ENCODE measurements at regions of chr1 and their contacts with region 1.

Region 1: GRCh38 chr1:25204797-25205480 is 27.4 kb downstream of the SYF2 start:
- DNase-seq: peak; percentile 66
- ATAC-seq: peak; percentile 59; the same call in 2 of the 3 replicates
- H3K4me3 ChIP-seq: peak overlapping the region; percentile 18 to 52 (median 42); a peak in 4 of 6 replicates
- H3K27ac ChIP-seq: no peak overlapping the region
- H3K4me1 ChIP-seq: peaks cover 43% of the 10 kb centered on the region
- H3K27me3 ChIP-seq: no peaks in the 10 kb centered on the region; a peak in 1 of 5 replicates
- CTCF ChIP-seq: peak; percentile 71
- EP300 ChIP-seq: no peak
- POLR2A ChIP-seq: no peak
- RAD21 ChIP-seq: peak; percentile 67

Region 2: GRCh38 chr1:24724345-24725208 is 480.4 kb before region 1 on chr1:
- CTCF ChIA-PET with region 1: no interaction called
- POLR2A ChIA-PET with region 1: no interaction called
- in situ Hi-C with region 1: no loop called
- intact Hi-C with region 1: no loop called
- DNase-seq: peak; percentile 96
- ATAC-seq: peak; percentile 94
- H3K4me3 ChIP-seq: peak overlapping the region; percentile 55 to 72 (median 72)
- H3K27ac ChIP-seq: peak overlapping the region; percentile 88
- H3K4me1 ChIP-seq: peaks cover 69% of the 10 kb centered on the region
- H3K27me3 ChIP-seq: no peaks in the 10 kb centered on the region
- CTCF ChIP-seq: no peak
- EP300 ChIP-seq: peak in 1 of 2 experiments; percentile 72; a peak in 1 of 4 replicates
- POLR2A ChIP-seq: peak; percentile 91 to 92
- RAD21 ChIP-seq: no peak

Region 3: DNA sequence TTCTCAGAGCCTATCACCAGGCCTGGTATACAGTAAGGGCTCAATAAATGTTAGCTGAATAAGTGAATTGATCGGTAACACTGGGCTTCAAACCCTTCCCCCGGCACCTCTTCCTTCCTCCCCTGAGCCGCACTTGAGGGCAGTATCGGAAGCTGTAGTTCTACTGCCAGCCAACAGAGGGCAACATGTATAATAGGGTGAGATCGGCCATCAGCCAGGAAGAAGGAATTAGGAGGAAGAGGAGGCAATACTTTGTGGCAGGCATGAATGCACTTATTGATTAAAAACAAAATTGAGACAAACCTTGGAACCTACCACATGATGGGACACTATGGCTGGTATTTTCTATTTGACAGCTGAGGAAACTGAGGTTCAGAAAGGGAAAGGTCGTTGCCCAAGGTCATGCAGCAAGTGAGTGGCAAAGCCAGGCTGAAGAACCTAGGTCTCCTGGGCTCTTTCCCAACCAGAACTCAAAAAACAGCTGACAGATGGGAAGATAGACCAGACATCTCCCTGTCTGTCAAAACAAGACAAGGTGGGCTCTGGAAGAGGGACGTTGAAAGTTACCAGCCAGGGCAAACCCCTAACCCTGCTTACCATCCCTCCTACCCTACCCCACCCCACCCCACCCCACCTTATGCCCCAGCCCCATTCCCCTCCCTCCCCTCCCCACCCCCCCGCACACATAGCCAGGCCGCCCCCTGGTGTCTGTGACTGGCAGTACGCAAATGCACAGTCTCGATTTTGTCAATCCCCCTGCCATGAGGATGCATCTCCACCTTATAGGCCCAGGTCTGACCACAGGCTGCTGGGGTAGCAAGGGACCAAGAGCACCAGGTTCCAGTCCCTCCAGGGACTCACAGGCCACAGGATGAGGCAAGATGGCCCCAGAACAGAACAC is 167.5 kb before region 1 on chr1:
- CTCF ChIA-PET with region 1: interaction called, 10 read pairs
- POLR2A ChIA-PET with region 1: no interaction called
- in situ Hi-C with region 1: no loop called
- intact Hi-C with region 1: loop called (anchors 5 kb)
- DNase-seq: peak; percentile 41
- ATAC-seq: peak; percentile 57
- H3K4me3 ChIP-seq: no peak overlapping the region
- H3K27ac ChIP-seq: no peak overlapping the region
- H3K4me1 ChIP-seq: peaks cover 7% of the 10 kb centered on the region; the same call in 1 of the 2 replicates
- H3K27me3 ChIP-seq: peaks cover 3 to 23% of the 10 kb centered on the region in 2 experiments; a peak in 2 of 5 replicates
- CTCF ChIP-seq: peak; percentile 65
- EP300 ChIP-seq: no peak
- POLR2A ChIP-seq: no peak
- RAD21 ChIP-seq: peak; percentile 26; the same call in 1 of the 2 replicates

Region 4: GRCh38 chr1:25117233-25117823 is 87.6 kb before region 1 on chr1:
- CTCF ChIA-PET with region 1: interaction called, 55 read pairs
- POLR2A ChIA-PET with region 1: interaction called, 3 read pairs
- in situ Hi-C with region 1: loop called (anchors 5 kb)
- intact Hi-C with region 1: loop called (anchors 1 kb)
- DNase-seq: peak; percentile 60
- ATAC-seq: peak; percentile 94
- H3K4me3 ChIP-seq: no peak overlapping the region
- H3K27ac ChIP-seq: no peak overlapping the region
- H3K4me1 ChIP-seq: peaks cover 16% of the 10 kb centered on the region
- H3K27me3 ChIP-seq: peaks cover 0 to 3% of the 10 kb centered on the region in 2 experiments; a peak in 1 of 5 replicates
- CTCF ChIP-seq: peak; percentile 80
- EP300 ChIP-seq: no peak
- POLR2A ChIP-seq: no peak
- RAD21 ChIP-seq: peak; percentile 84

Region 5: DNA sequence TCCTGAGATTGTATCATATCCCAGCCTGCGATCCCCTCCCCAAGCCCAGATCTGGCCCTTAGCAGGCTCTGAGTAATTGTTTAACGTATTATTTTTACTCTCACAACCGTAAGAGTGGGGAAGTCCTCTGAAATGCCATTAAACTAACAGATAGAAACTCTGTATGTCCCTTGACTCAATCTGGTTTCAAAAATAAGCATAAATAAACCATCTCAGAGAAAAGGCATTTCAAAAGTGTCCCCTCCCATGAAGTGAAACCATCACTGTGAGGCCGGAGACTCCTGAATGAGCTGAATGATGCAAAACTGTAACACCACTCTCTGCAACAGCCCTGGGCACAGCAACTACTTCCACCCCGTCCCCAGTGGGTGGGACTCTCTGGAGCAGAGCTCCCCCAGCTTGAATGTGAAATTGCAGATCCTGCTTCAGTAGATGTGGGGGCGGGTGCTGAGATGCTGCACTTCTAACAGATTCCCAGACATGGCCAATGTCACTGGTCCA is 76.8 kb before region 1 on chr1:
- CTCF ChIA-PET with region 1: no interaction called
- POLR2A ChIA-PET with region 1: no interaction called
- in situ Hi-C with region 1: no loop called
- intact Hi-C with region 1: loop called (anchors 2 kb)
- DNase-seq: no peak
- ATAC-seq: peak; percentile 26; the same call in 1 of the 3 replicates
- H3K4me3 ChIP-seq: 0 out of 6 replicates have a peak overlapping the region, but pooled peaks of 1 of the 3 experiments have one; percentile 13
- H3K27ac ChIP-seq: no peak overlapping the region
- H3K4me1 ChIP-seq: peaks cover 23% of the 10 kb centered on the region
- H3K27me3 ChIP-seq: 0 out of 5 replicates have a peak, but pooled peaks cover 0 to 1% of the 10 kb centered on the region in 2 experiments
- CTCF ChIP-seq: no peak
- EP300 ChIP-seq: no peak
- POLR2A ChIP-seq: no peak
- RAD21 ChIP-seq: no peak

Region 6: DNA sequence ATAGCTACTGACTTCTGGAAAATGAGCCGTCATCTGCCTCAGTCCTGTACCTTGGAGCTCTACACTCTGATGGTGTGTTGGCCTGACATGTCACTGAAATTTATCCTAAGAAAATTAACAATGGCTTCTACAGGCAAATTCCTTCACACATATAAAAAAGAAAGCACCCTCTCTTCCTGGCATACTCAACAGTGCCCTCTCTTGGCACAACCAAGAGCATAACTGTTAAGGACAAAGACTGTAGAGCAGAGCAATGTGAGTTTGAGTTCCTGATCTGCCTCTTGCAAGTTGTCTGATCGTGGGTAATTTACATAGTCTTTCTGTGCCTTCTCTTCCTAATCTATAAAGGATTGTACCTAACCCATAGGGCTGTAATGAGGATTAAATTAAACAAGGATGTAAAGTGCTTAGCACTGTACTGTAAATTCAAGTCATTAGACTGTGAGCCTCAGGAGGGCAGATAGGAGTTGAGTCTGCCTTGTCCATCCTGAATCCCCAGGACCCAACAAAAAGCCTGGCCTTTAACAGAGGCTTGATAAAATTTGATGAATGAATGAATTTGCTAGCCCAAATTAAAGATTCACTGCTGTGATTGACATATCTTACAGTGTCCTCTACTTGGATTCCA is 56.2 kb before region 1 on chr1:
- CTCF ChIA-PET with region 1: interaction called, 11 read pairs
- POLR2A ChIA-PET with region 1: no interaction called
- in situ Hi-C with region 1: no loop called
- intact Hi-C with region 1: loop called (anchors 2 kb)
- DNase-seq: peak; percentile 27
- ATAC-seq: peak; percentile 37; the same call in 1 of the 3 replicates
- H3K4me3 ChIP-seq: no peak overlapping the region
- H3K27ac ChIP-seq: no peak overlapping the region
- H3K4me1 ChIP-seq: peaks cover 10% of the 10 kb centered on the region; the same call in 1 of the 2 replicates
- H3K27me3 ChIP-seq: no peaks in the 10 kb centered on the region
- CTCF ChIP-seq: peak; percentile 62
- EP300 ChIP-seq: no peak
- POLR2A ChIP-seq: no peak
- RAD21 ChIP-seq: peak; percentile 36; the same call in 1 of the 2 replicates

Region 7: DNA sequence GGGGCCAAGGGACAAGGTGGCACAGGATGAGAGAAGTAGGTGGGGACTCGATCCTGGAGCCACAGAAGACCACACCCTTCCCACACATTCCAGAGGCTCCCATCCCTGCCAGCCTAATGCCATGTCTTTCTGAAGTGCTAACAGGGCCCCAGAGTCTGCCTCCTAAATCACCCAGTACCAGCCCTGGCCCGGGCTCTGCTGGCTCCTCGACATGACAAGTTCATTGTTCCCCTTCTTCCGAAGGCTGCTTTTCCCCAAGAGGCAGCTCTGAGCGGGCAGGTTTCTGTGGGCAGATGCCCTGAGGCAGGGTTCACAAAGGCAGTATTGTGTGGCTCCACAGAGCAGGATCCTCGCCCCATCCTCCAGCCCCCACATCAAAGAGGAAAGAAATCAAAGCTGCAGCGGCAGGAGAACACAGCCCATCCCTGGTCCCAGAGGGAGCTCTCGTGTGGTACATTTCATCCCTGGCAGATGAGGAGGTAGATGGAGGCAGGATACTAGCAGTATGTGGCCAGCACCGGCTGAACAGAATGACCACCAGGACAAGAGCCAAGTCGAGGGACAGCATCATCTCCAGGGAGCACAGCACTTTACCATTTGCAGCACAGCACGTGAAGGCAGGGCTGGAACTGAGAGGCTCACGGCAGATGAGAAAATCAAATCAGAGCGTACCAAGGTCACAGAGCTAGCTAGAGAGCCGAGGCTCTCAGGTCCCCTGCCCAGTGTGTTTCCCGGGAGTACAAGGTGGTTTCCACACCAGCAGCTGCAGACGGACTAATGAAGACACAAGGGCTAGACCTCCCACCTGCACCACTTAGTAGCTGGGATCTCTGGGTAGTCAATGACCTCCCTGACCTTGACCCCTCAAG is 37.4 kb before region 1 on chr1:
- CTCF ChIA-PET with region 1: no interaction called
- POLR2A ChIA-PET with region 1: interaction called, 48 read pairs
- in situ Hi-C with region 1: loop called (anchors 5 kb)
- intact Hi-C with region 1: no loop called
- DNase-seq: peak; percentile 93
- ATAC-seq: peak; percentile 85
- H3K4me3 ChIP-seq: peak overlapping the region; percentile 31 to 66 (median 35); a peak in 5 of 6 replicates
- H3K27ac ChIP-seq: peak overlapping the region; percentile 97
- H3K4me1 ChIP-seq: peaks cover 73% of the 10 kb centered on the region
- H3K27me3 ChIP-seq: no peaks in the 10 kb centered on the region
- CTCF ChIP-seq: peak; percentile 61
- EP300 ChIP-seq: peak; percentile 42 to 86; a peak in 3 of 4 replicates
- POLR2A ChIP-seq: peak in 1 of 2 experiments; percentile 49; a peak in 1 of 4 replicates
- RAD21 ChIP-seq: 0 out of 2 replicates have a peak, but pooled peaks have one; percentile 5

Region 8: DNA sequence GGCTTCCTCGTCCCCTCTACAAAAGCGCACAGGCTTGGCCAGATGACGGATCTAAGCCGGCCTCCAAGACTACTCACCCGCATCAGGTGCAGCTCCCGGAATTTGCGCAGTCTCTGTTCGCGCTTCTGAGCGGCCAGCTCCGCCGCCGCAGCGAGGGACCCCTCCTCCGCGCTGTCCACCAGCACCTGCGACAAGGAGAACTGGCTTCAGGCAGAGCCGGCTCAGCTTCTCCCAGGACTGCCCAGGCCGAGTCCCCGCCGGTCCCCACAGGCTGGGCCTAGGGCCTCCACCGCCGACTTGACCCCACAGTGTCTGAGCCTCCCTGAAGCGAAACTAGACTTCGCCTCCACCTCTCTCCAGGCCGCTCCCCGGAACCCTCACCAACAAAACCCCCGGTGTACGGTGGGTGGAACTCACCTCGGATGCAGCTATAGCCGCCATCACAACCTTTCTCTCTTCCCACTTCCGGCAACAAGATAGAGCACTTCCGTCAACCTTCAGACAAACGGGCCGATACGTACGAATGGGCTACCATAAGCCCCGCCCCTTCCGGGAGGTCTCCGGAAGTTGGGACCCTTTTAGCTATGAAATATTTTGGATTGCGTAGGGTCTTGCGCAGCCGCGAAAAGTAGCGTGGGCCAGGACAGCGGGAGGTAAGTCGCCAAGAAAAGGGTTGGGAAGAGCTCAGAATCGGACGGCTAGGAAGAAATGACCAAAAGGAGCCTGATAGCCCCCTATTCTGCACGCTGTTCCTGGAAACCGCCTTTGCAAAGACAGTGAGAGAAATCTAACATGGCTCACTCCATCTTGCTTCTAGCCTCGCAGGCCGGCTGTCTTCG is 27.3 kb after region 1 on chr1 and contains the start of gene SYF2:
- CTCF ChIA-PET with region 1: no interaction called
- POLR2A ChIA-PET with region 1: interaction called, 13 read pairs
- in situ Hi-C with region 1: no loop called
- intact Hi-C with region 1: no loop called
- DNase-seq: peak; percentile 93
- ATAC-seq: peak; percentile 95
- H3K4me3 ChIP-seq: peak within 1 kb of the TSS; percentile 74 to 86 (median 84)
- H3K27ac ChIP-seq: peak within 1 kb of the TSS; percentile 82
- H3K4me1 ChIP-seq: peaks cover 21% of the 10 kb centered on the region
- H3K27me3 ChIP-seq: no peaks in the 10 kb centered on the region
- CTCF ChIP-seq: no peak
- EP300 ChIP-seq: no peak
- POLR2A ChIP-seq: peak; percentile 64 to 65
- RAD21 ChIP-seq: no peak; the same call in 1 of the 2 replicates
- total RNA-seq, gene SYF2: 34.1 and 42.8 TPM in 2 replicates

Region 9: DNA sequence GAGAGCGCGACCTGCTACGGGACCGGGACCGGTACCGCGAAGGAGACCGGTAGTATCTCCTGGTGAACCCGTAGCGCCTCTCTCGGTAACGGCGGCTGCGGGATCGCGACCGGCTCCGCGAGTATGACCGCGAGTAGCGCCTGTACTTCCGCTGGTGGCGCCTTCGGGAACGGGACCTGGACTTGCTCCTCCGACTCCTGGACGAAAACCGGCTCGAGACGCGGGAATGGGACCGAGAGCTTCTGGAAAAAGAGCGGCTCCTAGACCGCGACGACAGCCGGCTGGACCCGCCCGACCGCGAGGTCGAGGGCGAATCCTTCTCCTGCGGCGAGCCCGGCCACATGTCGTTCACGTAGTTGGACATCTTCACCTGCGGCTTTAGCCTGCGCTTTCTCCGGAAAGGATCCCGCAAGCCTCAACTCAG is 41.7 kb after region 1 on chr1:
- CTCF ChIA-PET with region 1: no interaction called
- POLR2A ChIA-PET with region 1: no interaction called
- in situ Hi-C with region 1: no loop called
- intact Hi-C with region 1: no loop called
- DNase-seq: no peak
- ATAC-seq: peak; percentile 12
- H3K4me3 ChIP-seq: peak overlapping the region; percentile 68 to 96 (median 93)
- H3K27ac ChIP-seq: peak overlapping the region; percentile 84
- H3K4me1 ChIP-seq: peaks cover 33% of the 10 kb centered on the region
- H3K27me3 ChIP-seq: no peaks in the 10 kb centered on the region; a peak in 1 of 5 replicates
- CTCF ChIP-seq: peak; percentile 15; the same call in 1 of the 2 replicates
- EP300 ChIP-seq: no peak
- POLR2A ChIP-seq: peak in 1 of 2 experiments; percentile 49; a peak in 1 of 4 replicates
- RAD21 ChIP-seq: no peak

Measured in HepG2 (cell line).